Uterus (tissue), 4 donors: ENCODE measurements at regions of chr1 and their contacts with region 1.

Region 1: DNA sequence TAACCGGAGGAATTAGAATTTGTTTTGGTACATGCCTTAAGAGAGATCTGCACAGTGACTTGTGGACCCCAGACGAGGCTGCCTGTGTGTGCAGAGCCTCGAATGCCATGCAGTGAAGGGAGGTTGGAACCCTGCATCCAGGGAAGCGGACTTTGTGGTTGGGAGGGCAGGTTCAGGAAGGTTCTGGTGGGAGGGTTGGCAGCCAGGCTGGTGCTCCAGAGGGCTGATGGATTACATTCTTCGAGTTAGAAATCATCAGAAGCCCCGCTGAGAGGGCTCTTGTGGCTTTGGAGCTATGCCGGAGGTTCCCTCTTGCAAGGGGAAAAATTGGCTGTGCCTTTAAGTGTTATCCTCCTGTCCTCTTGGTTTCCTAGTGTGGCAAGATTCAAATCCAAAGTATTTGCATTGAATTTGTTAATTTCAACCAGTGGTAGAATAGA is 21.1 kb downstream of the ROR1 start:
- DNase-seq: no peak
- H3K4me3 ChIP-seq: no peak overlapping the region
- H3K27ac ChIP-seq: no peak overlapping the region
- H3K4me1 ChIP-seq: no peaks in the 10 kb centered on the region
- H3K27me3 ChIP-seq: no peaks in the 10 kb centered on the region
- CTCF ChIP-seq: no peak
- POLR2A ChIP-seq: no peak

Region 2: GRCh38 chr1:64062941-64063581 is 268.1 kb after region 1 on chr1:
- intact Hi-C with region 1: loop called (anchors 5 kb)
- DNase-seq: no peak
- H3K4me3 ChIP-seq: no peak overlapping the region
- H3K27ac ChIP-seq: no peak overlapping the region
- H3K4me1 ChIP-seq: no peaks in the 10 kb centered on the region
- H3K27me3 ChIP-seq: no peaks in the 10 kb centered on the region
- CTCF ChIP-seq: no peak
- POLR2A ChIP-seq: no peak